ENCODE measurements at regions of chr20 and their contacts with region 1.

Region 1: DNA sequence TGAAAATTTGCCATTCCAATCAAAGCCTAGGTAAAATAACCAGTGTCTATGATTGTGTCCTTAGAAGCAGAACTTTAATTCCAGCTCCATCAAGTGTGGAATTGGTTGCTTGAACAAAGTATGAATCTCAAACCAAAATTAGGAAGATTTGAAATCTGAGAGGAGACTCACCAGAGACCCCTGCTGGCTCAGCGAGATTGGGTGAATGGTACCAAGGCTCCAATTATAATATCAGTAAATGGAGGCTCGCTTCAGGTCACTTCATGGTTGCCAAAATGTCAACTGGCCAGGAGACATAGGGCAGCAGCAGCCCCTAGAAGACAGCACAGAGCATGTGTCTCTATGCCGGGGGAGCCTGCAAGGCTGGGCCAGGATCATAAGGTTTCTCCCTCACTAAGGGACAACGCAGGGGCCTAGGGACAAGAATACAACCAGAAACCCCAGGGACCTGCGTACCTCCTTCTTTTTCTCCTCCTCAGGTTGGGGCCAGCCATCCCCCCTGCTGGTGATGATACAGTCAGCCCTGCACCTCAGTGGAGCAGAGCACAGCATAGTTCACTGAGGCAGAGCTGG is 14.0 kb downstream of the RBL1 start:
- DNase-seq: peak in 4 of 5 donors; percentile 36 to 50 (median 44)
- H3K4me3 ChIP-seq: no peak overlapping the region
- H3K4me3 Mint-ChIP-seq: peak overlapping the region in 2 of 8 donors; percentile 16 to 26
- H3K27ac ChIP-seq: no peak overlapping the region
- H3K27ac Mint-ChIP-seq: peak overlapping the region; percentile 40 to 91 (median 67)
- H3K4me1 ChIP-seq: peaks cover 24% of the 10 kb centered on the region
- H3K4me1 Mint-ChIP-seq: peaks cover 16 to 25% (median 21%) of the 10 kb centered on the region in 4 donors
- H3K27me3 ChIP-seq: no peaks in the 10 kb centered on the region
- H3K27me3 Mint-ChIP-seq: no peaks in the 10 kb centered on the region

Region 2: DNA sequence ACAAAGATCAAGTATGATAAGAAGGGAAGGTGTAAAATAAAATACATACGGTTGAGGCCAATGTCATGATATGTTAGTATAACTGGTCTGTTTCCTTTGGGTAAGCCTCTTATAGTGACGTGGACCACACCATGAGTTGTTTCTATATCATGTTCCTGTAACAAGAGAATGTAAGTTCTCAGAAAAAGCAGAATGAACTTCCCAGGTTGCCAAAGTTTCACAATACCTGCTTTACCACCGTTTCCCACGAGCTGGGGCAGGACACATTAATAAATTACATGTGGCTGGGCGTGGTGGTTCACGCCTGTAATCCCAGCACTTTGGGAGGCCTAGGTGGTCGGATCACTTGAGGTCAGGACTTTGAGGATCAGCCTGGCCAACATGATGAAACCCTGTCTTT is 393.2 kb before region 1 on chr20:
- CTCF ChIA-PET with region 1: no interaction called
- POLR2A ChIA-PET with region 1: no interaction called
- intact Hi-C with region 1: no loop called
- DNase-seq: no peak
- H3K4me3 ChIP-seq: no peak overlapping the region
- H3K4me3 Mint-ChIP-seq: no peak overlapping the region
- H3K27ac ChIP-seq: no peak overlapping the region
- H3K27ac Mint-ChIP-seq: no peak overlapping the region
- H3K4me1 ChIP-seq: no peaks in the 10 kb centered on the region
- H3K4me1 Mint-ChIP-seq: no peaks in the 10 kb centered on the region
- H3K27me3 ChIP-seq: no peaks in the 10 kb centered on the region
- H3K27me3 Mint-ChIP-seq: no peaks in the 10 kb centered on the region

Region 3: DNA sequence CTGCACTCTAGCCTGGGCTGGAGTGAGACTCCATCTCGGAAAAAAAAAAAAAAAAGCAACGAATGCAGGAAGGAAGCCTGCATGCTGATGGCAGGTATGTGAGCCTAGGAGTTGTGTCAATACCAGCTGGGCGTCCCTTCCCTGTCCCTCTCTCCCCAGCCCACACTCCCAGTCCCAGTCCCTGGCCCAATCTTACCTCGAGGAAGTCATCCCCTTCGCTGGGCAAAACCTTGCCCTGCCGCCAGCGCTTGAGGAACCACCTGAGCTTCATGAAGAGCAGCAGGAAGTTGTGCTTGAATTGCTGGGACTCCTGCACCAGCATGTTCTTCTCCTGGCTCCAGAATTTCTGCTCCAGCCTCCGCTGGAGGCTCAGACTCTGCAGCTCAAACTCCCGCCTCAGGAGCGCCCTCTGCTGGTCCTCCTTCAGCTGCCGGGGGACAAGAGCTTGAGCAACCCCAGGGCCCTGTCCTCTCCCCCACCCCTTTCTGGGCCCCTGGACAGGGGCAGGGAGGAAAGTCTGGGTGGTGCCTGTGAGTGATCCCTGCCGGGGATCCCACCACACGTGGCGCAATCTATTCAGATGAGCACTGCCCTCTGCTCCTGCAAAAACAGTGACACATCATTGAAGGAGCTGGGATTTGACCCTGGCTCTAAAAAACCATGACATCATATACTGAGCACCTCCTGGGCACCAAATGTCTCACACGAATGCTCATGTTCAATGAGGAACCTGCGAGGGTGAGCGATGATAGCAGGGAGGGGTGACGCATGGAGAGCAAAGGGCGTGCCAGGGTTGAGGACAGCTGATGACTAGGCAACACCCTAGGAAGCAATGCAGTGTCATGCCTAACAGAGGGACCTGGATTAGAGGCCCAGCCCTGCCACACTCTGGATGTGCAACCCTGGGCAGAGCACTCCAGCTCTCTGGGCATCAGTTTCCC is 273.2 kb before region 1 on chr20:
- CTCF ChIA-PET with region 1: no interaction called
- POLR2A ChIA-PET with region 1: no interaction called
- intact Hi-C with region 1: no loop called
- DNase-seq: peak; percentile 49 to 65 (median 59)
- H3K4me3 ChIP-seq: no peak overlapping the region
- H3K4me3 Mint-ChIP-seq: no peak overlapping the region
- H3K27ac ChIP-seq: no peak overlapping the region
- H3K27ac Mint-ChIP-seq: peak overlapping the region in 1 of 7 donors; percentile 56
- H3K4me1 ChIP-seq: no peaks in the 10 kb centered on the region
- H3K4me1 Mint-ChIP-seq: peaks cover 0 to 3% (median 0%) of the 10 kb centered on the region in 4 donors
- H3K27me3 ChIP-seq: no peaks in the 10 kb centered on the region
- H3K27me3 Mint-ChIP-seq: no peaks in the 10 kb centered on the region

Region 4: GRCh38 chr20:36919715-36920333 is 162.0 kb before region 1 on chr20:
- CTCF ChIA-PET with region 1: interaction called, 12 read pairs
- POLR2A ChIA-PET with region 1: no interaction called
- intact Hi-C with region 1: loop called (anchors 1 kb)
- DNase-seq: peak; percentile 58 to 66 (median 61)
- H3K4me3 ChIP-seq: no peak overlapping the region
- H3K4me3 Mint-ChIP-seq: no peak overlapping the region
- H3K27ac ChIP-seq: no peak overlapping the region
- H3K27ac Mint-ChIP-seq: peak overlapping the region; percentile 13 to 84 (median 60)
- H3K4me1 ChIP-seq: peaks cover 21% of the 10 kb centered on the region
- H3K4me1 Mint-ChIP-seq: peaks cover 7 to 20% (median 11%) of the 10 kb centered on the region in 4 donors
- H3K27me3 ChIP-seq: no peaks in the 10 kb centered on the region
- H3K27me3 Mint-ChIP-seq: no peaks in the 10 kb centered on the region

Region 5: GRCh38 chr20:36988494-36988966 is 93.3 kb before region 1 on chr20:
- CTCF ChIA-PET with region 1: interaction called, 13 read pairs
- POLR2A ChIA-PET with region 1: no interaction called
- intact Hi-C with region 1: no loop called
- DNase-seq: peak; percentile 40 to 62 (median 53)
- H3K4me3 ChIP-seq: no peak overlapping the region
- H3K4me3 Mint-ChIP-seq: peak overlapping the region in 7 of 8 donors; percentile 16 to 71 (median 30)
- H3K27ac ChIP-seq: peak overlapping the region; percentile 7
- H3K27ac Mint-ChIP-seq: peak overlapping the region; percentile 72 to 96 (median 92)
- H3K4me1 ChIP-seq: peaks cover 28% of the 10 kb centered on the region
- H3K4me1 Mint-ChIP-seq: peaks cover 26 to 44% (median 31%) of the 10 kb centered on the region in 4 donors
- H3K27me3 ChIP-seq: no peaks in the 10 kb centered on the region
- H3K27me3 Mint-ChIP-seq: no peaks in the 10 kb centered on the region

Region 6: DNA sequence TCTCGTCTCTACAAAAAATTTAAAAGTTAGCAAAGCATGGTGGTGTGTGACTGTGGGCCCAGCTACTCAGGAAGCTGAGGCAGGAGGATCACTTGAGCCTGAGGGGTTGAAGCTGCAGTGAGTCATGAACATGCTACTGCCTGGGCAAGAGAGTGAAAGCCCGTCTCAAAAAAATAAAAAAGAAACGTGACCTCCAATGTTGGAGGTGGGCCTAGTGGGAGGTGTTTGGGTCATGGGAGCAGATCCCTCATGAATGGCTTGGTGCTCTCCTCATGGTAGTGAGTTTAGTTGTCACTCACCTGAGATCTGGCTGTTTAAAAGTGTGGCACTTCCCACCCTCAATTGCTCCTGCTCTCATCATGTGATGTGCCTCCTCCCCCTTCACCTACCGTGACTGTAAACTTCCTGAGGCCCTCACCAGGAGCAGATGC is 10.3 kb before region 1 on chr20:
- CTCF ChIA-PET with region 1: interaction called, 16 read pairs
- POLR2A ChIA-PET with region 1: no interaction called
- intact Hi-C with region 1: no loop called
- DNase-seq: peak; percentile 8 to 58 (median 32)
- H3K4me3 ChIP-seq: no peak overlapping the region
- H3K4me3 Mint-ChIP-seq: peak overlapping the region in 7 of 8 donors; percentile 18 to 77 (median 65)
- H3K27ac ChIP-seq: peak overlapping the region; percentile 29
- H3K27ac Mint-ChIP-seq: peak overlapping the region; percentile 82 to 95 (median 88)
- H3K4me1 ChIP-seq: peaks cover 36% of the 10 kb centered on the region
- H3K4me1 Mint-ChIP-seq: peaks cover 15 to 35% (median 28%) of the 10 kb centered on the region in 4 donors
- H3K27me3 ChIP-seq: no peaks in the 10 kb centered on the region
- H3K27me3 Mint-ChIP-seq: no peaks in the 10 kb centered on the region

Region 7: DNA sequence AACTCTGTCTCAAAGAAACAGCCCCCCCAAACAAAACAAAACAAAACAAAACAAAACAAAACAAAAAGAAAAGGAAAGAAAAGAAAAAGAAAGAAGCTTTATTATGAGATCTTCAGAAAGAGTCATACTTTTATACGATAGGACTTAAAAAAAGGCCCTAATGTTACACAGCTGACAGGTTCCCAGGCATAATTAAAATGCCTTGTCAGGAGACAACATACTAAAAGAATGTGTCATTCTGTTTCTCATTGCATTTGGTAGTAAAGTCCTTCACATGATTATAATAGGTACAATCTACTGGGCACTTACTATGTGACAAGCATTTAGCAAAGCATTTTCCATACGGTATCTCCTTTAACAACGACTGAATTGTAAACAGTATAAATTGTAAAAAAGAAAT is 60.9 kb after region 1 on chr20:
- CTCF ChIA-PET with region 1: no interaction called
- POLR2A ChIA-PET with region 1: no interaction called
- intact Hi-C with region 1: no loop called
- DNase-seq: no peak
- H3K4me3 ChIP-seq: no peak overlapping the region
- H3K4me3 Mint-ChIP-seq: no peak overlapping the region
- H3K27ac ChIP-seq: no peak overlapping the region
- H3K27ac Mint-ChIP-seq: peak overlapping the region in 1 of 7 donors; percentile 48
- H3K4me1 ChIP-seq: no peaks in the 10 kb centered on the region
- H3K4me1 Mint-ChIP-seq: no peaks in the 10 kb centered on the region
- H3K27me3 ChIP-seq: no peaks in the 10 kb centered on the region
- H3K27me3 Mint-ChIP-seq: no peaks in the 10 kb centered on the region

Region 8: DNA sequence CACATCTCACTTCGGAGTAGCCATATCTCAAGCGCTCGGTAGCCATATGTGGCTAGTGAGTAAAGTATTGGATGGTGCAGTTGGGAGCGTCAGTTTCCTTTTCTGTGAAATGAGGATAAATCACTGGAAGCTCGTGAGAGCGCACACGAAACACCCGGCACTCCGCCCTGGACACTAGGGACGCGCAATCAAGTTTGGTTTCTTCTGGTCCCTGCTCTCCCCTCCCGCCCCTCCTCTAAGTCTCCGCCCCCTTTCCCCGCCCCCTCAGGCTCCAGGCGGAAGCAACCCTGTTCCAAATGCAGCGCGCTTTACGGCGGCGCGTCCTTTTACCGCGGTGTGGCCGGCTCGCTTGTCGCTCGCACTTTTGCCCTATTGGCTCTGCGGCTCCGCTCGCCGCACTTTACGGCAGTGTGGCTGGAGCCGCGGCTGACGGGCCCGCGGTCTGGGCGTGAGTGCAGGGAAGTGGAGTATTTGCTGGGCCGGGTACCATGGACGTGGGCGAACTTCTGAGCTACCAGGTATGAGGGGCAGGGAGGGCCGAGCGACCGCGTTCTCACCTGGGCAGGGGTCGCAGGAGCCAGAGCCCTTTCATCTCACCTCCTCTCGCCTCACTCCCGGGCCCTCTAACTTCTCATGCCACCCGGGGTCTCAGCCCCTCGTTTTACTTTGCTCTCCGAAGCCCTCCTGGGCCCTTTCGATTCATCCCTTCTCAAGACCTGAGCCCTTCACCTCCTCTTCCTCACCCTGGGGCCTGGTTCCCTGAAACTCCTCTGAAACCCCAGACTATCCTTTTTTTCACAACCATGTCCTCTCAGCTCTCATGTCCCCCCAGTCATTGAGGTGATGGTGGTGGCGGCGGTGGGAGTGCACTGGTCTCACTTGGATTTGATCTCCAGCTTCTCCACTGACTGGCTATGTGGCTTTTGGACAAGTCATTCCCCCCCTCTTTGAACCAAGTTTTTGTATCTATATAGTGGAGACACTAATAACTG is 612.1 kb after region 1 on chr20 and contains the start of gene CTNNBL1:
- CTCF ChIA-PET with region 1: no interaction called
- POLR2A ChIA-PET with region 1: no interaction called
- intact Hi-C with region 1: no loop called
- DNase-seq: peak; percentile 92 to 96 (median 93)
- H3K4me3 ChIP-seq: peak within 1 kb of the TSS; percentile 71 to 90
- H3K4me3 Mint-ChIP-seq: peak within 1 kb of the TSS; percentile 94 to 99 (median 97)
- H3K27ac ChIP-seq: peak within 1 kb of the TSS; percentile 76
- H3K27ac Mint-ChIP-seq: peak within 1 kb of the TSS; percentile 82 to 99 (median 94)
- H3K4me1 ChIP-seq: peaks cover 25% of the 10 kb centered on the region
- H3K4me1 Mint-ChIP-seq: peaks cover 18 to 46% (median 31%) of the 10 kb centered on the region in 4 donors
- H3K27me3 ChIP-seq: peaks cover 5% of the 10 kb centered on the region
- H3K27me3 Mint-ChIP-seq: peaks cover 11 to 16% of the 10 kb centered on the region in 2 donors
- total RNA-seq, gene CTNNBL1: 41.5 to 45.1 TPM

Measured in CD4-positive, alpha-beta memory T cell (primary cell).